PC-9 (cell line): ENCODE measurements at regions of chr7 and their contacts with region 1.

Region 1: GRCh38 chr7:130486114-130486958 is 5.5 kb upstream of the MEST start:
- DNase-seq: peak; percentile 83 to 86
- H3K4me3 ChIP-seq: peak overlapping the region; percentile 72
- H3K27ac ChIP-seq: peak overlapping the region; percentile 61
- H3K4me1 ChIP-seq: peaks cover 10% of the 10 kb centered on the region; the same call in 1 of the 2 replicates
- H3K27me3 ChIP-seq: no peaks in the 10 kb centered on the region
- CTCF ChIP-seq: peak; percentile 92

Region 2: GRCh38 chr7:130205084-130205947 is 281.0 kb before region 1 on chr7 and contains the start of gene TMEM209:
- CTCF ChIA-PET with region 1: no interaction called
- POLR2A ChIA-PET with region 1: interaction called, 7 read pairs
- intact Hi-C with region 1: loop called (anchors 1 kb)
- DNase-seq: peak; percentile 95 to 98
- H3K4me3 ChIP-seq: peak within 1 kb of the TSS; percentile 63
- H3K27ac ChIP-seq: peak within 1 kb of the TSS; percentile 84
- H3K4me1 ChIP-seq: peaks cover 23% of the 10 kb centered on the region
- H3K27me3 ChIP-seq: no peaks in the 10 kb centered on the region
- CTCF ChIP-seq: no peak
- total RNA-seq, gene TMEM209: 20.0 and 30.8 TPM in 2 replicates

Region 3: GRCh38 chr7:130242198-130243014 is 243.9 kb before region 1 on chr7:
- CTCF ChIA-PET with region 1: no interaction called
- POLR2A ChIA-PET with region 1: no interaction called
- intact Hi-C with region 1: loop called (anchors 2 kb)
- DNase-seq: peak; percentile 38 to 48
- H3K4me3 ChIP-seq: no peak overlapping the region
- H3K27ac ChIP-seq: no peak overlapping the region
- H3K4me1 ChIP-seq: no peaks in the 10 kb centered on the region
- H3K27me3 ChIP-seq: no peaks in the 10 kb centered on the region
- CTCF ChIP-seq: peak; percentile 95

Region 4: GRCh38 chr7:130292682-130293257 is 193.6 kb before region 1 on chr7 and contains the start of gene CPA4:
- CTCF ChIA-PET with region 1: no interaction called
- POLR2A ChIA-PET with region 1: interaction called, 4 read pairs
- intact Hi-C with region 1: loop called (anchors 5 kb)
- DNase-seq: peak; percentile 64 to 98
- H3K4me3 ChIP-seq: peak within 1 kb of the TSS; percentile 25; the same call in 1 of the 2 replicates
- H3K27ac ChIP-seq: peak within 1 kb of the TSS; percentile 42
- H3K4me1 ChIP-seq: peaks cover 52% of the 10 kb centered on the region
- H3K27me3 ChIP-seq: no peaks in the 10 kb centered on the region
- CTCF ChIP-seq: no peak
- total RNA-seq, gene CPA4: 4.2 and 9.8 TPM in 2 replicates

Region 5: GRCh38 chr7:130419658-130420057 is 66.7 kb before region 1 on chr7:
- CTCF ChIA-PET with region 1: no interaction called
- POLR2A ChIA-PET with region 1: no interaction called
- intact Hi-C with region 1: loop called (anchors 1 kb)
- DNase-seq: no peak
- H3K4me3 ChIP-seq: no peak overlapping the region
- H3K27ac ChIP-seq: no peak overlapping the region
- H3K4me1 ChIP-seq: no peaks in the 10 kb centered on the region; the same call in 1 of the 2 replicates
- H3K27me3 ChIP-seq: no peaks in the 10 kb centered on the region
- CTCF ChIP-seq: no peak

Region 6: GRCh38 chr7:130440527-130441365 is 45.6 kb before region 1 on chr7 and contains the start of gene CEP41:
- CTCF ChIA-PET with region 1: no interaction called
- POLR2A ChIA-PET with region 1: interaction called, 10 read pairs
- intact Hi-C with region 1: loop called (anchors 1 kb)
- DNase-seq: peak; percentile 93 to 99
- H3K4me3 ChIP-seq: peak within 1 kb of the TSS; percentile 73
- H3K27ac ChIP-seq: peak within 1 kb of the TSS; percentile 65
- H3K4me1 ChIP-seq: peaks cover 15% of the 10 kb centered on the region
- H3K27me3 ChIP-seq: no peaks in the 10 kb centered on the region
- CTCF ChIP-seq: no peak
- total RNA-seq, gene CEP41: 16.3 and 18.0 TPM in 2 replicates

Region 7: DNA sequence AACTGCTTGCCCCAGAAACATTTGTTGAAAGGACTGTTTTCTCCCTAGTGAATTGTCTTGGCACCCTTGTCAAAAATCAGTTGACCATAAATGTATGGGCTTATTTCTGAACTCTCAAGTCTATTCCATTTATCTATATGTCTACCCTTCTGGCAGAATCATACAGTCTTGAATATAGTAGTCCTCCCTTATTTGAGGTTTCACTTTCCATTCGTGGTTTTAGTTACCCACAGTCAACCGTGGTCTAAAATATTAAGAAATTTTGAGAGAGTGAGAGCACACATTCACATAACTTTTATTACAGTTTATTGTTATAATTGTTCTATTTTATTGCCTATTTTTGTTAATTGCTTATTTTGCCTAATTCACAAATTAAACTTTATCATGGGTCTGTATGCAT is 28.1 kb before region 1 on chr7:
- CTCF ChIA-PET with region 1: no interaction called
- POLR2A ChIA-PET with region 1: no interaction called
- intact Hi-C with region 1: no loop called
- DNase-seq: no peak
- H3K4me3 ChIP-seq: no peak overlapping the region
- H3K27ac ChIP-seq: no peak overlapping the region
- H3K4me1 ChIP-seq: no peaks in the 10 kb centered on the region
- H3K27me3 ChIP-seq: no peaks in the 10 kb centered on the region
- CTCF ChIP-seq: no peak

Region 8: GRCh38 chr7:130504151-130504550 is 17.8 kb after region 1 on chr7:
- CTCF ChIA-PET with region 1: no interaction called
- POLR2A ChIA-PET with region 1: no interaction called
- intact Hi-C with region 1: no loop called
- DNase-seq: no peak
- H3K4me3 ChIP-seq: no peak overlapping the region
- H3K27ac ChIP-seq: no peak overlapping the region
- H3K4me1 ChIP-seq: no peaks in the 10 kb centered on the region
- H3K27me3 ChIP-seq: no peaks in the 10 kb centered on the region
- CTCF ChIP-seq: no peak

Region 9: DNA sequence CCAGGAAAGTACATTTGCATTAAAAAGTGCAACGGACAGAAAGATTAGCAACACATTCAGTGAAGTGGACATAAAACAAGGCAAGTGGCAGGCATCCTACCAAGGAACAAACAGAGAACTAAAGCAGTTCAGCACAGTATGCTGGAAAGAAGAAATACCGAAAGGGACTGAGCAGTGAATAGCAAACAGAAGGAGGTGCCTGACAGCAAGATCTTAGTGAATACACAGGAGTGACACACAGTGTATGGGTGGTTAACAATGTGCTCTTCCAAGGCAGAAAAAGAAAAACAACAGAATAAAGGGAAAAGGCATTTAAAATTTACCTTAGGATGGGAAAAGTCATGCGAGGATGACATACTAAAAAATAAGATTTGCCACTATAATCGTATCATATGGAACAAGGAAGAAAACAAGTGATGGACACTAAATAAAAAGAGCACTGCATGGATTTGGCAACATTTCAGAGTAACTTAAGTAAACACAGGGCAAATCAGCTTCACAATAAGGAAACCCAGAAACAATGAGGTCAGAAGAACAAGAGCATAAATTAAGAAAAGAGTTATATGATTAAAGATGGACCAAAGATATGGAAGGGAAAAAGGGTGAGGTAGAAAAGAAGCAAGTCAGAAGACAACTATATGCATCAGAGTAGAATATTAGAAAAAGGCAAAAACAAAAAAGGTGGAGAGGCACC is 35.1 kb after region 1 on chr7:
- CTCF ChIA-PET with region 1: no interaction called
- POLR2A ChIA-PET with region 1: no interaction called
- intact Hi-C with region 1: no loop called
- DNase-seq: no peak
- H3K4me3 ChIP-seq: no peak overlapping the region
- H3K27ac ChIP-seq: no peak overlapping the region
- H3K4me1 ChIP-seq: no peaks in the 10 kb centered on the region
- H3K27me3 ChIP-seq: no peaks in the 10 kb centered on the region
- CTCF ChIP-seq: no peak